Heart left ventricle (tissue), 16 donors: ENCODE measurements at regions of chr6 and their contacts with region 1.

Region 1: GRCh38 chr6:56115715-56116114 is 131.7 kb downstream of the COL21A1 start:
- DNase-seq: no peak
- ATAC-seq: no peak
- H3K4me3 ChIP-seq: no peak overlapping the region
- H3K27ac ChIP-seq: no peak overlapping the region
- H3K4me1 ChIP-seq: no peaks in the 10 kb centered on the region
- H3K27me3 ChIP-seq: no peaks in the 10 kb centered on the region
- CTCF ChIP-seq: no peak
- POLR2A ChIP-seq: no peak

Region 2: DNA sequence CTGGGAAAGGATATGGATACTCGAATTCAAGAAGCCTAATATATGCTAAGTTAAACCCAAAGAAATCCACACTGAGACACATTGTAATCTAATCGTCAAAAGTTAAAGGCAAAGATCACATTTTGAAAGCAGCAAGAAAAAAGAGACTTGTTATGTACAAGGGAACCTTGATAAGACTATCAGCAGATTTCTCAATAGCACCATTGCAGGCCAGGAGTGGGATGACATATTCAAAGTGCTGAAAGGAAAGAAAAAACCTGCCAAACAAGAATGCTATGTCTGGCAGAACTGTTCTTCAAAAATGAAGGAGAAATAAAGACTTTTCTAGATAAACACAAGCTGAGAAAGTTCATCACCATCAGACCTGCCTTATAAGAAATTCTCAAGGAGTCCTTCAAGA is 56.4 kb after region 1 on chr6:
- intact Hi-C with region 1: loop called in 1 of 10 experiments (anchors 10 kb)
- DNase-seq: no peak
- ATAC-seq: no peak
- H3K4me3 ChIP-seq: no peak overlapping the region
- H3K27ac ChIP-seq: no peak overlapping the region
- H3K4me1 ChIP-seq: no peaks in the 10 kb centered on the region
- H3K27me3 ChIP-seq: no peaks in the 10 kb centered on the region
- CTCF ChIP-seq: no peak
- POLR2A ChIP-seq: no peak